Thyroid gland (tissue), 4 donors: ENCODE measurements at regions of chr7 and their contacts with region 1.

Region 1: GRCh38 chr7:139075031-139075652 is 34.4 kb downstream of the ZC3HAV1 start:
- DNase-seq: peak; percentile 68 to 69
- H3K4me3 ChIP-seq: no peak overlapping the region
- H3K27ac ChIP-seq: peak overlapping the region in 1 of 3 donors; percentile 11
- H3K4me1 ChIP-seq: no peaks in the 10 kb centered on the region
- H3K27me3 ChIP-seq: no peaks in the 10 kb centered on the region
- CTCF ChIP-seq: peak; percentile 43 to 87 (median 80)
- POLR2A ChIP-seq: no peak

Region 2: DNA sequence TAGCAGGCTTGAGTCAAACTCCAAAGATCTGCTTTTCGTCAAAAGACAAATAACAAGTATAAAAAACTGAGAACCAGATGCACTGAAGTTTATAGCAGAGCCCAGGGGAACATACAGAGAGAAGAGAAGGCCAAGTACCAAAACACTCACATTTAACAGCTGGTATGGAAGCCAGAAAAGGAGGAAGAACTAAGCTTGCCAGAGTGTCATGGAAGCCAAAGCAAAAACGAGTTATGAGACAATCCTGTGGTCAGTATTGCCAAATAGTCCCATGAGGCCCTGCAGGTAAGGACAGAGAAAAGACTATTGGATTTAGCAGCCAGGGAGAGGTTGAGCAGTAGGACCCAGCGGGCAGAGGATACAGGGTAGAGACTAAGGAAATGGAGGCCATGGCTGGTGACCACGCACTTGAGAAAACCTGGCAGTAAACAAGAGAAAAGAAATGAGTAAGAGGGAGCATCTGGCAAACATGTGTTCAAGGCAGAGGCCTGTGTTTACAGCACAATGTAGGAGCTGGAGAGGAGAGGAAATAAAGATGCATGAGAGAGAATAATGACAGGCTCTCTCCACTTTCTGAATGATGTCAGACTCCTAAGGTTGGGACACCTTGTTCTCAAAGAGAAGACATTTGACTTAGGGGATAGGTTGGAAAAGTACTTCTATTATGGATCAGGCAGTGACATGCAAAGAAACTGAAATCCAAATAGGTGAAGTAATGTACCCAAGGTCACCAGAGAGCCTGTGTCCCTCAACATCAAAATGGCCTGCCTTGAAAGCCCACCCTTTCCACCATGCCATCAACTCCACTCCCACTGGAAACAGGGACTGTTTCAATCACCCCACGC is 1082.4 kb before region 1 on chr7:
- intact Hi-C with region 1: no loop called
- DNase-seq: peak in 1 of 2 donors; percentile 38
- H3K4me3 ChIP-seq: no peak overlapping the region
- H3K27ac ChIP-seq: peak overlapping the region; percentile 38 to 91 (median 78)
- H3K4me1 ChIP-seq: peaks cover 94 to 100% of the 10 kb centered on the region in 2 donors
- H3K27me3 ChIP-seq: no peaks in the 10 kb centered on the region
- CTCF ChIP-seq: no peak
- POLR2A ChIP-seq: no peak

Region 3: DNA sequence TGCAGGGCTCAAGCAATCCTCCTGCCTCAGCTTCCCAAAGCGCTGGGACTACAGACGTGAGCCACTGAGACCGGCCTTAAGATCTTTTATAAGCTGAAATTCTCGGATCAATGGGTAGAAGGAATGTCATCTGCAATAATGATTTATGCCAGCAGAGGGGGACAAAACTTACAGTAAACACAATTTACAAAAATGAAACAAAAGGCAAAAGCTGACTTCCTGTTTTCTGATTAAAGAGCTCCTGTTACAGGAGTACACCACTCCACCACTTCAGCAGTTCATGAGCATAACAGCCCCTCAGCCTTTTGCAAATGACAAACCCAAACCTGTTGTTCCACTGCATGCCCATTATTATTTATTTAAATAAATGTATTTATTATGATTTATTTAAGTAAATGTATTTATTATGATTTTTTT is 188.6 kb before region 1 on chr7:
- intact Hi-C with region 1: loop called (anchors 10 kb)
- DNase-seq: peak; percentile 4 to 8
- H3K4me3 ChIP-seq: no peak overlapping the region
- H3K27ac ChIP-seq: no peak overlapping the region
- H3K4me1 ChIP-seq: no peaks in the 10 kb centered on the region
- H3K27me3 ChIP-seq: no peaks in the 10 kb centered on the region
- CTCF ChIP-seq: peak; percentile 25 to 86 (median 69)
- POLR2A ChIP-seq: no peak

Region 4: DNA sequence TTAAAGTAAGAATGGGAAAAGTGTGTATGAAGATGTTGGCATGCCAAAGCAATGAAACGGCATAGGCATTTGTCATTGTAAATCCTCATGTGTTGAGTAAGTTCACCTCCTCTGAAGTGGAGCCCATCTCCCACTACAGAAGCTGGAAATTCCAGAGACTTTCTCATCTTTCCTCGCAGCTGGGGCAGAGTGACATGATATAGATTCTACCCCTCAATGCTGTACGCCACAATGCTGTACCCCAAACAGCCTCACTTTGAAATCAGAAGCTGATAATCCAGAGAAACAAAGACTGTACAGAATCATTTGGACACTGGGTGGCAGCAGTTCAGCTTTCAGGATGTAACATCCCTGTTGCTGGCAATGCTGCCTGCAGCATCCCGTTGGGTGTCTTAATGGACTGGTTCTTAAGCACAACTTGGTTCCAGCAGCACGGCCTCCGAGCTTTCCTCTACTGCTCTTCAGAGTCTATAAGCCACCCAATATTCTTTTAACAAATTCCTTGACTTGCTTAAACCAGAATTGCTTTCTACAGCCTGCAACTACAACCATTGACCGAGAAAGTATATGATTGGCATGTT is 58.1 kb before region 1 on chr7:
- intact Hi-C with region 1: loop called (anchors 2 kb)
- DNase-seq: peak; percentile 77 to 86
- H3K4me3 ChIP-seq: no peak overlapping the region
- H3K27ac ChIP-seq: no peak overlapping the region
- H3K4me1 ChIP-seq: peaks cover 0 to 9% of the 10 kb centered on the region in 2 donors
- H3K27me3 ChIP-seq: no peaks in the 10 kb centered on the region
- CTCF ChIP-seq: peak in 5 of 6 experiments; percentile 34 to 85 (median 73)
- POLR2A ChIP-seq: no peak